A673 (cell line): ENCODE measurements at regions of chr2 and their contacts with region 1.

Region 1: GRCh38 chr2:31170071-31170698 is 31.9 kb upstream of the GALNT14 start:
- DNase-seq: peak; percentile 72
- H3K4me3 ChIP-seq: no peak overlapping the region
- H3K27ac ChIP-seq: no peak overlapping the region
- H3K4me1 ChIP-seq: no peaks in the 10 kb centered on the region
- H3K27me3 ChIP-seq: peaks cover 6% of the 10 kb centered on the region
- CTCF ChIP-seq: peak; percentile 93

Region 2: GRCh38 chr2:30862054-30862651 is 308.0 kb before region 1 on chr2:
- CTCF ChIA-PET with region 1: interaction called, 5 read pairs
- POLR2A ChIA-PET with region 1: no interaction called
- intact Hi-C with region 1: loop called (anchors 2 kb)
- DNase-seq: peak; percentile 85
- H3K4me3 ChIP-seq: no peak overlapping the region
- H3K27ac ChIP-seq: no peak overlapping the region
- H3K4me1 ChIP-seq: no peaks in the 10 kb centered on the region
- H3K27me3 ChIP-seq: no peaks in the 10 kb centered on the region
- CTCF ChIP-seq: peak; percentile 74

Region 3: GRCh38 chr2:30987566-30987965 is 182.6 kb before region 1 on chr2:
- CTCF ChIA-PET with region 1: interaction called, 10 read pairs
- POLR2A ChIA-PET with region 1: no interaction called
- intact Hi-C with region 1: no loop called
- DNase-seq: no peak
- H3K4me3 ChIP-seq: no peak overlapping the region
- H3K27ac ChIP-seq: no peak overlapping the region
- H3K4me1 ChIP-seq: no peaks in the 10 kb centered on the region
- H3K27me3 ChIP-seq: no peaks in the 10 kb centered on the region
- CTCF ChIP-seq: no peak

Region 4: GRCh38 chr2:31151501-31151900 is 18.7 kb before region 1 on chr2:
- CTCF ChIA-PET with region 1: interaction called, 14 read pairs
- POLR2A ChIA-PET with region 1: no interaction called
- intact Hi-C with region 1: no loop called
- DNase-seq: no peak
- H3K4me3 ChIP-seq: no peak overlapping the region
- H3K27ac ChIP-seq: no peak overlapping the region
- H3K4me1 ChIP-seq: no peaks in the 10 kb centered on the region
- H3K27me3 ChIP-seq: peaks cover 6% of the 10 kb centered on the region
- CTCF ChIP-seq: 0 out of 2 replicates have a peak, but pooled peaks have one; percentile 25